CD8-positive, alpha-beta T cell (primary cell): ENCODE measurements at regions of chr11 and their contacts with region 1.

Region 1: GRCh38 chr11:87037450-87038234 is at the start of gene TMEM135:
- DNase-seq: peak; percentile 83 to 96 (median 90)
- ATAC-seq: peak; percentile 94
- H3K4me3 ChIP-seq: peak within 1 kb of the TSS; percentile 85 to 93
- H3K4me3 Mint-ChIP-seq: peak within 1 kb of the TSS; percentile 99
- H3K27ac ChIP-seq: peak within 1 kb of the TSS; percentile 67 to 88
- H3K27ac Mint-ChIP-seq: peak within 1 kb of the TSS; percentile 96
- H3K4me1 ChIP-seq: peaks cover 20% of the 10 kb centered on the region
- H3K4me1 Mint-ChIP-seq: peaks cover 51% of the 10 kb centered on the region
- H3K27me3 ChIP-seq: no peaks in the 10 kb centered on the region
- H3K27me3 Mint-ChIP-seq: no peaks in the 10 kb centered on the region
- CTCF ChIP-seq: no peak
- total RNA-seq, gene TMEM135: 11.0 to 13.7 TPM

Region 2: GRCh38 chr11:85620256-85620655 is 1417.4 kb before region 1 on chr11:
- CTCF ChIA-PET with region 1: no interaction called
- POLR2A ChIA-PET with region 1: no interaction called
- intact Hi-C with region 1: loop called in 1 of 2 experiments (anchors 5 kb)
- DNase-seq: no peak
- ATAC-seq: no peak
- H3K4me3 ChIP-seq: no peak overlapping the region
- H3K4me3 Mint-ChIP-seq: no peak overlapping the region
- H3K27ac ChIP-seq: no peak overlapping the region
- H3K27ac Mint-ChIP-seq: no peak overlapping the region
- H3K4me1 ChIP-seq: no peaks in the 10 kb centered on the region
- H3K4me1 Mint-ChIP-seq: peaks cover 8% of the 10 kb centered on the region
- H3K27me3 ChIP-seq: peaks cover 0 to 2% of the 10 kb centered on the region in 2 experiments
- H3K27me3 Mint-ChIP-seq: peaks cover 2% of the 10 kb centered on the region
- CTCF ChIP-seq: no peak

Region 3: GRCh38 chr11:86244522-86245368 is 792.9 kb before region 1 on chr11 and contains the start of gene EED:
- CTCF ChIA-PET with region 1: no interaction called
- POLR2A ChIA-PET with region 1: no interaction called
- intact Hi-C with region 1: loop called (anchors 5 to 10 kb)
- DNase-seq: peak; percentile 88 to 97 (median 94)
- ATAC-seq: peak; percentile 85
- H3K4me3 ChIP-seq: peak within 1 kb of the TSS; percentile 100
- H3K4me3 Mint-ChIP-seq: no peak within 1 kb of the TSS
- H3K27ac ChIP-seq: peak within 1 kb of the TSS; percentile 97 to 99
- H3K27ac Mint-ChIP-seq: no peak within 1 kb of the TSS
- H3K4me1 ChIP-seq: peaks cover 25% of the 10 kb centered on the region
- H3K4me1 Mint-ChIP-seq: peaks cover 27% of the 10 kb centered on the region
- H3K27me3 ChIP-seq: no peaks in the 10 kb centered on the region
- H3K27me3 Mint-ChIP-seq: no peaks in the 10 kb centered on the region
- CTCF ChIP-seq: no peak
- total RNA-seq, gene EED: 23.5 to 24.7 TPM

Region 4: GRCh38 chr11:86869966-86870570 is 167.6 kb before region 1 on chr11:
- CTCF ChIA-PET with region 1: no interaction called
- POLR2A ChIA-PET with region 1: no interaction called
- intact Hi-C with region 1: no loop called
- DNase-seq: peak in 7 of 9 experiments; percentile 17 to 47 (median 23)
- ATAC-seq: no peak
- H3K4me3 ChIP-seq: no peak overlapping the region
- H3K4me3 Mint-ChIP-seq: no peak overlapping the region
- H3K27ac ChIP-seq: no peak overlapping the region
- H3K27ac Mint-ChIP-seq: no peak overlapping the region
- H3K4me1 ChIP-seq: no peaks in the 10 kb centered on the region
- H3K4me1 Mint-ChIP-seq: no peaks in the 10 kb centered on the region
- H3K27me3 ChIP-seq: no peaks in the 10 kb centered on the region
- H3K27me3 Mint-ChIP-seq: peaks cover 2% of the 10 kb centered on the region
- CTCF ChIP-seq: peak; percentile 67

Region 5: GRCh38 chr11:86955361-86956120 is 82.1 kb before region 1 on chr11 and contains the start of gene FZD4:
- CTCF ChIA-PET with region 1: no interaction called
- POLR2A ChIA-PET with region 1: no interaction called
- intact Hi-C with region 1: loop called in 1 of 2 experiments (anchors 1 kb)
- DNase-seq: peak in 8 of 9 experiments; percentile 11 to 74 (median 37)
- ATAC-seq: peak; percentile 75
- H3K4me3 ChIP-seq: peak within 1 kb of the TSS; percentile 61 to 74
- H3K4me3 Mint-ChIP-seq: peak within 1 kb of the TSS; percentile 87
- H3K27ac ChIP-seq: no peak within 1 kb of the TSS
- H3K27ac Mint-ChIP-seq: no peak within 1 kb of the TSS
- H3K4me1 ChIP-seq: peaks cover 10% of the 10 kb centered on the region
- H3K4me1 Mint-ChIP-seq: peaks cover 15% of the 10 kb centered on the region
- H3K27me3 ChIP-seq: peaks cover 0 to 5% of the 10 kb centered on the region in 2 experiments
- H3K27me3 Mint-ChIP-seq: peaks cover 44% of the 10 kb centered on the region
- CTCF ChIP-seq: no peak
- total RNA-seq, gene FZD4: 0.05 TPM in 1 of 2 experiments, not detected in the other

Region 6: GRCh38 chr11:87081358-87081757 is 43.7 kb after region 1 on chr11:
- CTCF ChIA-PET with region 1: no interaction called
- POLR2A ChIA-PET with region 1: interaction called, 7 read pairs
- intact Hi-C with region 1: loop called (anchors 2 to 5 kb)
- DNase-seq: peak in 2 of 9 experiments; percentile 32 to 58
- ATAC-seq: peak; percentile 52
- H3K4me3 ChIP-seq: peak overlapping the region; percentile 31 to 49
- H3K4me3 Mint-ChIP-seq: peak overlapping the region; percentile 81
- H3K27ac ChIP-seq: peak overlapping the region; percentile 23 to 79
- H3K27ac Mint-ChIP-seq: peak overlapping the region; percentile 80
- H3K4me1 ChIP-seq: peaks cover 9% of the 10 kb centered on the region
- H3K4me1 Mint-ChIP-seq: peaks cover 28% of the 10 kb centered on the region
- H3K27me3 ChIP-seq: no peaks in the 10 kb centered on the region
- H3K27me3 Mint-ChIP-seq: no peaks in the 10 kb centered on the region
- CTCF ChIP-seq: no peak